ENCODE measurements at regions of chr1 and their contacts with region 1.

Region 1: GRCh38 chr1:27300341-27301051 is 21.5 kb upstream of the TMEM222 start:
- DNase-seq: peak; percentile 80
- H3K4me3 ChIP-seq: no peak overlapping the region
- H3K27ac ChIP-seq: peak overlapping the region; percentile 88
- H3K4me1 ChIP-seq: peaks cover 43% of the 10 kb centered on the region
- H3K27me3 ChIP-seq: no peaks in the 10 kb centered on the region
- CTCF ChIP-seq: peak; percentile 100

Region 2: DNA sequence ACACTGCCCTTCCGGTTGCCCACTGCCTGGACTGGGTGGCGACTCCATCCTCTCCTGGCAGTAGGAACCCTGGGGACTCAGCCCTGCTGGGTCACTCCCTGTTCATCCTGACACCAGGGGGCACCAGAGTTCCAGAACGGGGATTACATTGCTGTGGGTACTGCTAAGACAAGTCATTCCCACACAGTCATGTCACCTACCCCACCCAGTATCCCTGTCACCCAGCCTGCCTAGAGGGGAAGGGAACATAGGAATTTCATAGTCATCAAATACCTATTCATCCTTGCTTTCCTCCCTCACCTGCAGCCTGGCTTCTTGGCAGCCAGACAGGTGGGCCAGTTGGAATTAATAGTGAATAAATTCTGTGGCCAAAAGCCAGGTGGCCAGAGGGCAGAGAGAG is 447.3 kb before region 1 on chr1:
- intact Hi-C with region 1: no loop called
- DNase-seq: peak; percentile 81
- H3K4me3 ChIP-seq: no peak overlapping the region
- H3K27ac ChIP-seq: no peak overlapping the region
- H3K4me1 ChIP-seq: peaks cover 6% of the 10 kb centered on the region
- H3K27me3 ChIP-seq: no peaks in the 10 kb centered on the region
- CTCF ChIP-seq: peak; percentile 84

Region 3: GRCh38 chr1:27392096-27392777 is 91.7 kb after region 1 on chr1 and contains the start of gene GPR3:
- intact Hi-C with region 1: loop called (anchors 5 kb)
- DNase-seq: peak; percentile 93
- H3K4me3 ChIP-seq: peak within 1 kb of the TSS; percentile 64
- H3K27ac ChIP-seq: peak within 1 kb of the TSS; percentile 68
- H3K4me1 ChIP-seq: peaks cover 51% of the 10 kb centered on the region
- H3K27me3 ChIP-seq: no peaks in the 10 kb centered on the region
- CTCF ChIP-seq: peak; percentile 63
- total RNA-seq, gene GPR3: 0.16 TPM

Region 4: DNA sequence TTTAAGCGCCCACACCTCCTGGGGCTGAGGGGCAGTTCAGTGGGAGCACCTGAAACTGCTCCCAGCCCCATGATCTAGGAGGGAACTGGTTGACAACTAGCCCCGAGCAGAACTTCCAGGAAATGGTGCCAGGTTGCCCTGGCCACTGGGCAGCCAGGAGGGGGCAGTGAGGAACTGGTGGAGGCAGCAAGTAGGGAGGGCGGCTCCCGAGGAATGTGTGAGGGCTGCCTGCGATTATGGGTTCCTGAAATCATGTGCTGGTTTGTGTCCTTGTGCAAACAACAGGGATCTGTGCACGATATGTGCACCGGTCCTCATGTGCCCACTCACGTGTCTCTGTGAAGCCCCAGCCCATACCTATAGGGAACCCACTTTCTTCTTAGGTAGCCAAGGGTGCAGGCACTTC is 101.9 kb after region 1 on chr1:
- intact Hi-C with region 1: no loop called
- DNase-seq: peak; percentile 74
- H3K4me3 ChIP-seq: no peak overlapping the region
- H3K27ac ChIP-seq: peak overlapping the region; percentile 85
- H3K4me1 ChIP-seq: peaks cover 99% of the 10 kb centered on the region
- H3K27me3 ChIP-seq: no peaks in the 10 kb centered on the region
- CTCF ChIP-seq: peak; percentile 70

Region 5: DNA sequence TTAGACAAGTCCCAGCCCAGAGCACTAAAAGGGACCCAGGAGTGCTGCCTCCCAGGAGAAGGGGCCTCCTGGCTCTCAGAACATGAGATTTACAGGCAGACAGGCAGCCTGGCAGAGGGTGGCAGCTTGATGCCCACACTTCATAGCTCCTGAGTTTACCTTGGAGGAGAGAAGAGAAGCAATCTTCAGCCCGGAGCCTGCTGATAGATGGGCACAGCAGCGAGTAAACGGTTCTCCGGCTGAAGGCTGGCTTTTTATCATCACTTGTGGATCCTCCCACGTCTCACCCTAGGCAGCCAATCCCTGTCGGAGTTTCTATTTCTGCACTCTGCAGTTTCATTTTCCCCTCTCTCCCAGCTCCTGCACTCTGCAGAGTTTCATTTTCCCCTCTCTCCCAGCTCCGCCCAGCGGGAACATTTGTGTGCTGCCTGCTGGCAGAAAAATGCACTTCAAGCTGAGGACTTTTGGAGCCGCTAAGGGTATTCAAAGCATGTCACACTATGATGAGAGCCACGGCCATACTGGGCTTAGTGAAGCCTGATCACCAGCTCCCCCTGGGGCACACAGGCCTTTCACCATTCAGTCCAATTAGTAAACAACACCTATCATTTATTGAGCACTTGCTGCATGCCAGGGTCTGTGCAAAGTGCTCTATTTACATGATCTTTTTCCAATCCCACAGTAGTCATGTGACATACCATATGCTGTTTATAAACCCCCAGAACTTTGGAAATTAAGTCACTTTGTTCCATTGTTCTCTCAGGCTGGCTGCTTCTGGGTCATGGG is 371.7 kb after region 1 on chr1 and contains the start of gene IFI6:
- intact Hi-C with region 1: loop called (anchors 10 kb)
- DNase-seq: peak; percentile 81
- H3K4me3 ChIP-seq: peak within 1 kb of the TSS; percentile 74
- H3K27ac ChIP-seq: peak within 1 kb of the TSS; percentile 87
- H3K4me1 ChIP-seq: peaks cover 43% of the 10 kb centered on the region
- H3K27me3 ChIP-seq: no peaks in the 10 kb centered on the region
- CTCF ChIP-seq: peak; percentile 67
- total RNA-seq, gene IFI6: 39.2 TPM